GM13977 (cell line): ENCODE measurements at regions of chr5 and their contacts with region 1.

Region 1: DNA sequence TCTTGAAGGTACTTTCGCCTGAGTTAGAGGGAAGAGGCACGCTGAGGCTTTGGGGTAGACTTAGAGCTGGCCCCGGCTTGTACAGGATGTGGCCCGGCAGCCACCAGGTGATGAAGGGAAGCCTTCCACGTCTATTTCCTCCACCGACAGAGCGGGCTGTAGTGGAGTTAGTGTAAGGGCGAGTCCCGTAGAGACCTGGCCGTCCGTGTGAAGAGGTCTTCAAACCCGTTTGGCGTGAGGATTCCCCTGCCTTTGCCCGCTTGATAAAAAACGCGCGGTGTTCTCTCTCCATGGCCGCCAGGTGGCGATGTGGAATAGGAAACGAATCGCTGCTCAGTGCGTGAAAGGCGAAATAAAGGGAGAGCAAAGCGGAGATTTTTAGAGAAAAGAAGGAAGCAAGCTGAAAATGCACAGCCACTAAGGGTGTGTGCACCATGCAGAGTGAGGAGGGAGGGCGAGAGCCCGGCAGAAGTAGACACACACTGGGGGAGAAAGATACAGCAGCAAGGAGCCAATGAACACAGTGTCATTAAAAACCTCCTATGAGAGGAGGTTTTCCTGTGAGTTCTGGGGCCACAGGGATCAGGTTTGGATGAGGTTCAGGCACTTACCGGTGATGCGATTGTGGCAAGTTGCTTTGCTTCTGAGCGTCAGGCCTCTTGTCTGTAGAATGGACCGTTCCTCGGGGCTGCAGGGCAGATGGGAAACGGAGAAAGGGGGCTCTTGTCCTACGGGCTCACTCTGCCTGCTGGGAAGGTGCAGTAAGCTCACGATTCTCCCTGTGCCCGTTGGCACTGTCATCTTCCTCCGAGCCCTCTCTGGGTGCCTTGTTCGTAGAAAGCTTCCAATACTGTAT is 34.2 kb downstream of the STC2 start:
- DNase-seq: peak; percentile 78
- CTCF ChIP-seq: peak; percentile 85

Region 2: DNA sequence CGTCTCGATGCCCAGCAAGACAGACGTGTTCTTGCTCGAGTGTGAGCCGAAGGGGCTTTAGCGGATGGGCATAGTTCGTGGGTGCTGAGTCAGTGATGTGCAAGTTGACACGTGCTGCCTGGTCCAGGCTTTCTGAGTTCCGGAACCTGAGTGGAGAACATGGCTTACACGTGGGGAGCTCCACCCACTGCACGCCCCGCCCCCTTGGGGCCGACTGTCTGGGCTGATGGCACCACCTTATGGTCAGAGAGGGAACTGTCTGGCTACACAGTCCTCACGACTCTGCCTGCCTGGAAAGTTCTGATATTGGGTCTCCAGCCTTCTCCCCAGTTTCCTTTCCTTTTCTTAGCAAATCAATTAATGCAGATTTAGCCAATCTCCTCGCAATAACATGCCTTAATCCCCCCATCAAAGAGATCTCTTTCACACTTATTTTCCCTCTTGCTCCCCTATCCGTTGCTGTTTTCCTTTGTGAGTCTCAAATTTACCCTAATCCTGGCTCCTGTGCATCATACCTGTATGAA is 38.0 kb after region 1 on chr5:
- in situ Hi-C with region 1: loop called (anchors 5 kb)
- DNase-seq: peak; percentile 92
- CTCF ChIP-seq: peak; percentile 87

Region 3: DNA sequence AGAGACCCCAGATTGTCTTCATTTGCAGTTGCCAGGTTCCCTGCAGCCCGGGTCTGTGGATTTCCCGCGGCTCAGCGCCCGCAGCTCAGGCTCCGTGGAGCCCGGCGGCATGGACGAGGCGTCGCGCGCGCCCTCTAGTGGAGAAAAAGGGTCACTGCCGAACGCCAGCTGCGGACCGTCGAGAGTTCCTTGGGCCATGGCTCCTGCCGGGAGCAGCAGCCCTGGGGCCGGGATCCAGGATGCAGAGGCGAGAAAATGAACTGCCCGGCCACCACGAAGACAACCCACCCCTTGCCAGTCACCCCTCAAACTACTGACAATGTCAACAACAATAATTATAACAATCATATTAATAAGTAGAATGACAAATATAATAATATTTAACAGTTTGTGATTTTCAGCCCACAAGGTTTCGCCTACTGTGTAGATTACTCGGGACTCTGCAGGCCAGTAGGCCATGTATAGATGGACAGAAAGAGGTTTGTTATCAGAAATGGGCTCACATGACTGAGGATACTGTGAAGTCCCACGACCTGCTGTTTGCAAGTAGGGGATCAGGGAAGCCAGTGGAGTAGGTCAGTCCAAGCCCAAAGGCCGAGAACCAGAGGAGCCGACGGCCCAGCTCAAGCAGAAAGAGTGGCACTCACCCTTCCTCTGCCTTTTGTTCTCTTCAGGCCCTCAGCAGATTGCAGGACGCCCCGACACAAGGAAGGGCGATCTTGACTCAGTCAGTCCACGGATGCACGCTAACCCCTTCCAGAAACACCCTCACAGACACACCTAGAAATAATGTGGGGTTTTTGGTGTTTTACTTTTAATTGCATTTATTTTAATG is 279.3 kb after region 1 on chr5:
- in situ Hi-C with region 1: loop called (anchors 25 kb)
- DNase-seq: peak; percentile 82
- CTCF ChIP-seq: peak; percentile 99